OCI-LY7 (cell line): ENCODE measurements at regions of chr12 and their contacts with region 1.

Region 1: DNA sequence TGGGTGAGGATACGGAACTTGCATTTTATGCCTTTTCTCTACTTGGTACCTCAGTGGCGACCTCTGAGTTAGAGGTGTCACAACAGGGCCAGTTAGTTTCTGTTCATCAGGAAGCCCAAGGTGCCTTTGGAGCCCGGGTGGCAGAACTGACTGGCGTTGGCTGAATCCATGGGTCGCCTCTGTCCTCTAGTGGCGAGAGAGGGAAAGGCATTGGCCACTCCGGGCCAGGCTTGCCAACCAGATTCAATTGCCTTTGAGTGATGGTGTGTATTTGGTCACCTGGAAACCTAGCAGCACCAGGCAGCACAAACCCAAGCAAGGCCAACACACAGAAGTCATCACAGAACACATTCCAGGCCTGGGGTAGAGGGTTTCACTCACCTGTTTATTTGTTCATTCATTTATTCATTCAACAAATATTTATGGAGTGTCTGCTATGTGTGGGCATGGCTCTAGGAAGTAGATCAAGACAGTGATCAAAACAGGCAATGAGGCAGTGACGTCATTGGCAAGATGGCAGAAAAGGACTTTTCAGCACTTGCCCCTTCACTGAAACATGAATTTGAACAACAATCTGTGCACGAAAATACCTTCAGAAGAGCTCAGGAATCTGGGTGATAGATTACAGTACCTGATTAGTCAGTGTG is 40.5 kb upstream of the KCNA5 start:
- DNase-seq: peak; percentile 63
- H3K4me3 ChIP-seq: no peak overlapping the region
- H3K27ac ChIP-seq: no peak overlapping the region
- H3K4me1 ChIP-seq: no peaks in the 10 kb centered on the region
- CTCF ChIP-seq: peak; percentile 89

Region 2: DNA sequence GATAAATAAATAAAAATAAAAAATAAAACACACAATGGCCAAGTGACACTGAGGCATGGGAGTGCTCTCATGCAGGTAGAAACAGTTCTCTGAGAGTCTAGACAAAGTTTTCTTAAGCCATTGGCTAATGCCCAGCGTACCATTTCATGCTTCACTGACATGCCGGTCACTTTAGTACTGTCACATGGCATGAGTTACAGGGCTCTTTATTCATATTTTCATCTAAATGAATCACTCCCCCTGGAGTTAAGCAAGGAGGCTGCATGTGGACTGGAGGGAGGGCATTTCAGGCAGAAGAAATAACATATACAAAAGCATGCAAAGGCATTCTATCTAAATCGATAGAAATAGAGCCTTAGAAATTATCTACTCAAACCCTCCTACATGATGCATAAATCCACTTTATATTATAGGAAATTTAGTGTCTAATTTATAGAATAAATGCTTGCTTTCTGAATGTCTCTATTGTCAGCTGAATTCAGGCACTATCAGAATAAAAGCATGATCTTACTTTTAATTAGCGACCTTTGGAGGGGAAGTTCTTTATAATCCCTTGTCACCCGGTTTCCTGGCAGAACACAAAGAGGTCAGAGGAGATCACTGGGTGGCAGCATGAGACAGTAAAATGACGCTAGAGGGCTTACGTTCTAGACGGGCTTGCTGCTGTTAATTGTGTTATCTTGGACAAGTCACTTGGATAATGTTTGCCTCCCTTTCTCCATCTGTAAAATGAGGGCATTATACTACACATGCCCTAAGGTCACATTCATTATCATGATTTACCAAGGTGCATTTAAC is 423.6 kb before region 1 on chr12:
- CTCF ChIA-PET with region 1: interaction called, 3 read pairs
- POLR2A ChIA-PET with region 1: no interaction called
- intact Hi-C with region 1: loop called (anchors 10 kb)
- DNase-seq: peak; percentile 72
- H3K4me3 ChIP-seq: no peak overlapping the region
- H3K27ac ChIP-seq: no peak overlapping the region
- H3K4me1 ChIP-seq: peaks cover 34% of the 10 kb centered on the region
- CTCF ChIP-seq: peak; percentile 84

Region 3: GRCh38 chr12:4763549-4763948 is 239.6 kb before region 1 on chr12:
- CTCF ChIA-PET with region 1: no interaction called
- POLR2A ChIA-PET with region 1: no interaction called
- intact Hi-C with region 1: loop called (anchors 5 kb)
- DNase-seq: no peak
- H3K4me3 ChIP-seq: no peak overlapping the region
- H3K27ac ChIP-seq: no peak overlapping the region
- H3K4me1 ChIP-seq: no peaks in the 10 kb centered on the region
- CTCF ChIP-seq: no peak

Region 4: DNA sequence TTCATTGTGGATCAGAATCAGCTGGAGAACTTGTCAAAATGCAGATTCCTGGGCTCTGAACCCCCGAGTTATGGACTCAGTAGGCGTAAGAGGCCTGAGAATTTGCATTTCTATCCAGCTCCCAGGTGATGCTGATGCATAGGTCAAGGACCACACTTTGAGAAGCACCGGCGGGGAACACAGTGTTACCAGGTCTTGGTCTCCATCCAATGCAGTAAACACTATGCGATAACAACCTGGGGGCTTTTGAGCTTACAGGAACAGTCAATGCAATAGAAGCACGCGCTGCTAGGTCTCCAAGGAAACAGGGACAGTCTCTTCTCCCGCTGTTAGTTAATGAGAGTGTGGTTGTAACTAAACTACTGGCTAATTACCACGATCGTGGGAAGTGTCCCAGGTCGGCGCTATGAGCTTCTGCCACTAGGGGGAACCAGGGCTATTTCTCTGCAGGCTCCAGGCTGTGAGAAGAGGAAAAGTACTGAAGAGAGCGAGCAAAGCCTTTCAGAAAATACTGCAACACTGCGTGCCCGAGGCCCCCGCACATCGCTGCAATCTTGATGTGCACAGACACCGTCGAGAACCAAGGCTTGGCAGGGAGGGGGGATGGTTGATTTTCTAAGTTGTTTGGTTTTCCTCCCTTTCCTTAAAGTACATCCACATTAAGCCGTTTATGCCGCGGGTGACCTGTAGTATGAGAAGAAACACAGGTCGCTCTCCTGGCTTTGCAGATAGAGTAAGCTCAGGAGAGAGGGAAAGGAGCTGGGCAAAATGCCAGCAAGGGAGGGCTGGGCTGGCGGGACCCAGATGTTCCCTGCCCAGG is 145.5 kb before region 1 on chr12:
- CTCF ChIA-PET with region 1: no interaction called
- POLR2A ChIA-PET with region 1: no interaction called
- intact Hi-C with region 1: loop called (anchors 1 kb)
- DNase-seq: peak; percentile 77
- H3K4me3 ChIP-seq: no peak overlapping the region
- H3K27ac ChIP-seq: no peak overlapping the region
- H3K4me1 ChIP-seq: peaks cover 15% of the 10 kb centered on the region
- CTCF ChIP-seq: peak; percentile 91

Region 5: DNA sequence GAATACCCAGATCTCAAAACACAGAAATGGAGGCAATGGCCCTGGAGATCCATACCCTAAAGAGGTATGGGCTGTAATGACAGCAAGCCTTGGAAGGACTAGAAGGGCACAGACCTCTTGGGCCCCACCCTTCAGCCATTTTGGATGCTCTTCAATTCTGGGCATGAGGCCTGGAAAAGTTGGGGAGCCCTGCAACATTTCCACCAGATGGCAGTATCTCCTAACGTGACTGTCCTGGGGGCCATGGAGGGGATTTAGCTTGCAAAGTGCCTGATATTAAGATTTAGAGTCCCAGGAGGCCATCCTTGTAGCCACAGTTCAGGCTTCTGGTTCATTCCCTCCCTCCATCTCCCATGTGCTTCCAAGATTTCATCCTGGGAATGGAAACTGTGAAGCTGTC is 70.7 kb after region 1 on chr12:
- CTCF ChIA-PET with region 1: no interaction called
- POLR2A ChIA-PET with region 1: no interaction called
- intact Hi-C with region 1: no loop called
- DNase-seq: peak; percentile 5
- H3K4me3 ChIP-seq: no peak overlapping the region
- H3K27ac ChIP-seq: no peak overlapping the region
- H3K4me1 ChIP-seq: no peaks in the 10 kb centered on the region
- CTCF ChIP-seq: peak; percentile 61